GM12878 (cell line): ENCODE measurements at regions of chr6 and their contacts with region 1.

Region 1: GRCh38 chr6:155253337-155253736 is 10.5 kb upstream of the CLDN20 start:
- DNase-seq: no peak
- ATAC-seq: no peak
- H3K4me3 ChIP-seq: no peak overlapping the region
- H3K27ac ChIP-seq: no peak overlapping the region
- H3K4me1 ChIP-seq: no peaks in the 10 kb centered on the region
- H3K27me3 ChIP-seq: no peaks in the 10 kb centered on the region
- CTCF ChIP-seq: no peak
- EP300 ChIP-seq: no peak
- POLR2A ChIP-seq: no peak
- RAD21 ChIP-seq: no peak

Region 2: DNA sequence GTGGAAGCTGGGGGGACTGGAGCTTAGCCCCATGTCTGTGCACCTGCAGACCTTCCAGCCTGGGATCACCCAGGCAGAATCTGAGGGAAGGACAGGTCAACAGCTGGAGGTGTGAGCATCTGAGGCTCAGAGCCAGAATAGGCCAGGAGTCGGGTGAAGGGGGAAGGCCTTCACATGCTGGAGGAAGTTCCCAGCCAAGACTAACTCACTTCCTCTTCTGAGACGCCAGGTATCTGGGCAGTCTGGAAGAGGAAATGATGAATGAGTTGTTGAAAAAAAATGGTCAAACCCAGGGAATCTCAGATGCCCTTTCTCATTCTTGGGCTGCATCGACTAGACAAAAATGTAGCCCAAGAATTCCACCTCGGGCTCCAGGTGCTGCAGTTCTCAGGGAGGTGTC is 331.9 kb before region 1 on chr6:
- CTCF ChIA-PET with region 1: interaction called, 10 read pairs
- POLR2A ChIA-PET with region 1: no interaction called
- RAD21 ChIA-PET with region 1: interaction called, 5 read pairs
- SMC1A ChIA-PET with region 1: no interaction called
- in situ Hi-C with region 1: loop called (anchors 5 kb)
- intact Hi-C with region 1: no loop called
- DNase-seq: no peak
- ATAC-seq: peak; percentile 73
- H3K4me3 ChIP-seq: no peak overlapping the region
- H3K27ac ChIP-seq: no peak overlapping the region
- H3K4me1 ChIP-seq: no peaks in the 10 kb centered on the region
- H3K27me3 ChIP-seq: no peaks in the 10 kb centered on the region
- CTCF ChIP-seq: no peak
- EP300 ChIP-seq: no peak
- POLR2A ChIP-seq: no peak
- RAD21 ChIP-seq: no peak

Region 3: DNA sequence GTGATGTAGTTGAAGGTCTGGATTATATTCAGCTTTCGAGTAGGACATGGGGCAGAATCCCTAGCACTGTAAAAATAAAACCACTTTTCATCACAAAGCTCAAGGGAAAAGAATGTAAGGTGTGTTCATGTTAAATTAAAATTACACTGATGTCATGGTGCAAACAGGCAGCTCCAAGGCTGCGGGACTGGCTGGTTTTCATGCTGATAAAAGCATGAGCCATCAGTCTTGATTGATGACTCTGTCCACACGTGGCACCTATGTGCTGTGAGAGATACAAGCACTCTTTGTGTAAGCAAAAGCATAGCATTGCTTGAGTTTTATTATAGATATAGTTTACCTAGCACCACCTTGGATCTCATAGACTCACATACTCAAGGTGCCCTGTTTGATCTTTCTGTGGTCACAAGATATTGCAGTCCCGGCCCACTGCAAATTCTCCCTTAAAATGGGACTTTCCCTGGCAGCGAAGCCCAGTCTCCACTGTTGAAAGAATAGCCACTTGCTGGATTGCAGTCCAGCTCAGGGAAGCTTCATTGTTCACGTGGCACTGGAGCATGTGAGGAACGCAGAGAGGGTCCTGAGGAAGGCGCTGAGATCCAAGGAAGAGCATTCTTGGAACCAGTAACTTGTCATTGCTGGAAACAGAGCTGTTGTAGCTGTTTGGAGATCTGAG is 167.6 kb before region 1 on chr6:
- CTCF ChIA-PET with region 1: no interaction called
- POLR2A ChIA-PET with region 1: no interaction called
- RAD21 ChIA-PET with region 1: no interaction called
- SMC1A ChIA-PET with region 1: no interaction called
- in situ Hi-C with region 1: no loop called
- intact Hi-C with region 1: no loop called
- DNase-seq: no peak
- ATAC-seq: peak; percentile 48
- H3K4me3 ChIP-seq: no peak overlapping the region
- H3K27ac ChIP-seq: no peak overlapping the region
- H3K4me1 ChIP-seq: no peaks in the 10 kb centered on the region
- H3K27me3 ChIP-seq: no peaks in the 10 kb centered on the region; a peak in 1 of 4 replicates
- CTCF ChIP-seq: no peak
- EP300 ChIP-seq: 0 out of 4 replicates have a peak, but pooled peaks of 1 of the 2 experiments have one; percentile 12
- POLR2A ChIP-seq: no peak
- RAD21 ChIP-seq: no peak

Region 4: GRCh38 chr6:155264693-155265320 is 11.5 kb after region 1 on chr6:
- CTCF ChIA-PET with region 1: interaction called, 7 read pairs
- POLR2A ChIA-PET with region 1: no interaction called
- RAD21 ChIA-PET with region 1: interaction called, 13 read pairs
- SMC1A ChIA-PET with region 1: interaction called, 15 read pairs
- in situ Hi-C with region 1: no loop called
- intact Hi-C with region 1: no loop called
- DNase-seq: no peak
- ATAC-seq: no peak
- H3K4me3 ChIP-seq: no peak overlapping the region
- H3K27ac ChIP-seq: no peak overlapping the region
- H3K4me1 ChIP-seq: peaks cover 17% of the 10 kb centered on the region
- H3K27me3 ChIP-seq: no peaks in the 10 kb centered on the region
- CTCF ChIP-seq: no peak
- EP300 ChIP-seq: no peak
- POLR2A ChIP-seq: no peak
- RAD21 ChIP-seq: no peak